Natural killer cell (primary cell): ENCODE measurements at regions of chr11 and their contacts with region 1.

Region 1: DNA sequence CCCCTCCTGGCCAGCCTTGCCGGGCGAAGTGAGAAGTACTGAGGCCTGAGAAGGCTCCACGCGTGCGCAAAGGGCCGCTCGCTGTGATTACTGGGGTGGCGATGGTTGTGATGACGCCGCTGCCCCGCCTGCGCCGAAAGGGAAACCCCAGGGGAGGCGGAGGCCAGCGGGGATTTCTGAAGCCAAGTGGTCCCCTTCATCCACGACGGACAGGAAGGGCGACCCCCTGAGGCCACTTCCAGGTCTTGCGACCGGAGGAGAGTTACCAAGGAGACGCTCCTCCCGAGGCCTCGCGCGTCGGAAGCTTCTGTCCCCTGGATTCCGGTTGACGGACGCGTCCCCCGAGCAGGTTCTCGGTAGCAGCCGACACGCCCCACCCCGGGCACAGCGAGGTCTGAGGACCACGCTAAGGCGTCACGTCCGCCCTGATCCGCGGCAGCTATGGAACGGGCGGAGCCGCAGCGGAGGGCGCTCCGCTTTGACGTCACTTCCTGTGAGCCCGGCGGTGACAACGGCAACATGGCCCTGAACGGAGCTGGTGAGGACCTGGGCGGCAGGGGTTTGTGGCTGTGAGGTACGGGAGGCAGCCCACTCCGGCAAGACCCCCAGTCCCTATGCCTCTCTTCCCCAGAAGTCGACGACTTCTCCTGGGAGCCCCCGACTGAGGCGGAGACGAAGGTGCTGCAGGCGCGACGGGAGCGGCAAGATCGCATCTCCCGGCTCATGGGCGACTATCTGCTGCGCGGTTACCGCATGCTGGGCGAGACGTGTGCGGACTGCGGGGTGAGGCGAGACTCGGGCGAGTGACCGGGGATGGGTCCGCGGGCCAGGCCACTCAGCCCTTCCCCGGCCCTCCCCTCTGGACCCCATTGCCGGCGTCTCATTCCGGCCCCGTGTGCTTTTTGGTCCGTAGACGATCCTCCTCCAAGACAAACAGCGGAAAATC is at the start of gene ZNRD2:
- DNase-seq: peak; percentile 96 to 99
- ATAC-seq: peak; percentile 59 to 86 (median 70)
- H3K4me3 ChIP-seq: peak within 1 kb of the TSS; percentile 54
- H3K4me3 Mint-ChIP-seq: peak within 1 kb of the TSS; percentile 98
- H3K27ac ChIP-seq: peak within 1 kb of the TSS; percentile 97
- H3K27ac Mint-ChIP-seq: peak within 1 kb of the TSS; percentile 99
- H3K4me1 ChIP-seq: peaks cover 85% of the 10 kb centered on the region
- H3K4me1 Mint-ChIP-seq: peaks cover 64 to 86% of the 10 kb centered on the region in 2 donors
- H3K27me3 ChIP-seq: no peaks in the 10 kb centered on the region
- H3K27me3 Mint-ChIP-seq: no peaks in the 10 kb centered on the region
- CTCF ChIP-seq: peak; percentile 29
- total RNA-seq, gene ZNRD2: 40.9 to 64.1 (median 60.0) TPM

Region 2: GRCh38 chr11:65382033-65382807 is 188.0 kb before region 1 on chr11 and contains the start of gene SLC25A45:
- intact Hi-C with region 1: loop called (anchors 5 kb)
- DNase-seq: peak; percentile 90 to 94
- ATAC-seq: peak; percentile 75 to 89 (median 79)
- H3K4me3 ChIP-seq: peak within 1 kb of the TSS; percentile 51
- H3K4me3 Mint-ChIP-seq: peak within 1 kb of the TSS; percentile 89
- H3K27ac ChIP-seq: peak within 1 kb of the TSS; percentile 92
- H3K27ac Mint-ChIP-seq: peak within 1 kb of the TSS; percentile 99
- H3K4me1 ChIP-seq: peaks cover 81% of the 10 kb centered on the region
- H3K4me1 Mint-ChIP-seq: peaks cover 39 to 56% of the 10 kb centered on the region in 2 donors
- H3K27me3 ChIP-seq: no peaks in the 10 kb centered on the region
- H3K27me3 Mint-ChIP-seq: no peaks in the 10 kb centered on the region
- CTCF ChIP-seq: peak; percentile 83
- total RNA-seq, gene SLC25A45: 50.9 to 61.1 (median 61.0) TPM

Region 3: DNA sequence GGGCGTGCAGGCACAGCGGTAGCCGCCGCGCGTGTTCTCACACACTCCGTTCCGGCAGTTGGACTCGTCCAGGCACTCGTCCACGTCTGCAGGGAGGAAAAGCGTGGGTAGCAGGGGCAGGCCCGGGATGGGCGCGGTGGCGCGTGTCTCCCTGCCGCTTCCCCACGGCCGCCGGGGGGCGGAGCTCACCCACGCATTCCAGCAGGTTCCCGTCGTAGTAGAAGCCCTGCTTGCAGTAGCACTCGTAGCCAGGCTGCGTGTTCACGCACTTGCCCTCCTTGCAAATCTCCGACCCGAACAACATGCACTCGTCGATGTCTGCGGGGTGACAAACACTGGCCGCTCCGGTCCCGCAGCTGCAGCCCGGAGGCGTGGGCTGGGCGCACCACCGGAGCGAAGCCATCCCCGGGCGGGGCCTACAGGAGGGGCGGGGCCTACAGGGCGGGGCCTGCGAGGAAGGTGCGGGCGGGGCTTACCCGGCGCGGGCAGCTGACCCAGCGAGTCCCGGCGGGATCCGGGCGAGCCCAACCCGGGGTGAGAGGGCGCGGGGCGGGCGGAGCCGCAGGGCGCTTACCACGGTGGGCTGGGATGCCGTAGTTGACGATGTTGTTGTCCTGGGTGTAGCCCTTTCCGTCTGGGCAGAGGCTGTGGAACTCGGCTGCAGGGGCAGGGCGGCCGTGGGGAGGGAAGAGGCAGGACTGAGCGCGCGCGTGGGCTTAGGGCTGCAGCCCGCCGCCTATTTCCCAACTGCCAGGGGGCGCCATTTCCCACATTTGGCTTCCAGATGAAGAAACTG is 29.8 kb before region 1 on chr11:
- intact Hi-C with region 1: loop called (anchors 1 kb)
- DNase-seq: peak; percentile 88 to 93
- ATAC-seq: peak; percentile 88 to 96 (median 90)
- H3K4me3 ChIP-seq: peak overlapping the region; percentile 71
- H3K4me3 Mint-ChIP-seq: peak overlapping the region; percentile 88
- H3K27ac ChIP-seq: peak overlapping the region; percentile 70
- H3K27ac Mint-ChIP-seq: peak overlapping the region; percentile 39 to 76
- H3K4me1 ChIP-seq: peaks cover 17% of the 10 kb centered on the region
- H3K4me1 Mint-ChIP-seq: peaks cover 7 to 40% of the 10 kb centered on the region in 2 donors
- H3K27me3 ChIP-seq: no peaks in the 10 kb centered on the region
- H3K27me3 Mint-ChIP-seq: no peaks in the 10 kb centered on the region
- CTCF ChIP-seq: peak; percentile 52

Region 4: GRCh38 chr11:65588199-65589054 is 18.2 kb after region 1 on chr11:
- intact Hi-C with region 1: loop called (anchors 1 kb)
- DNase-seq: peak; percentile 65 to 90
- ATAC-seq: peak; percentile 82 to 86 (median 84)
- H3K4me3 ChIP-seq: no peak overlapping the region
- H3K4me3 Mint-ChIP-seq: peak overlapping the region; percentile 2
- H3K27ac ChIP-seq: peak overlapping the region; percentile 83
- H3K27ac Mint-ChIP-seq: peak overlapping the region; percentile 86 to 93
- H3K4me1 ChIP-seq: peaks cover 40% of the 10 kb centered on the region
- H3K4me1 Mint-ChIP-seq: peaks cover 17 to 36% of the 10 kb centered on the region in 2 donors
- H3K27me3 ChIP-seq: no peaks in the 10 kb centered on the region
- H3K27me3 Mint-ChIP-seq: no peaks in the 10 kb centered on the region
- CTCF ChIP-seq: peak; percentile 65

Region 5: DNA sequence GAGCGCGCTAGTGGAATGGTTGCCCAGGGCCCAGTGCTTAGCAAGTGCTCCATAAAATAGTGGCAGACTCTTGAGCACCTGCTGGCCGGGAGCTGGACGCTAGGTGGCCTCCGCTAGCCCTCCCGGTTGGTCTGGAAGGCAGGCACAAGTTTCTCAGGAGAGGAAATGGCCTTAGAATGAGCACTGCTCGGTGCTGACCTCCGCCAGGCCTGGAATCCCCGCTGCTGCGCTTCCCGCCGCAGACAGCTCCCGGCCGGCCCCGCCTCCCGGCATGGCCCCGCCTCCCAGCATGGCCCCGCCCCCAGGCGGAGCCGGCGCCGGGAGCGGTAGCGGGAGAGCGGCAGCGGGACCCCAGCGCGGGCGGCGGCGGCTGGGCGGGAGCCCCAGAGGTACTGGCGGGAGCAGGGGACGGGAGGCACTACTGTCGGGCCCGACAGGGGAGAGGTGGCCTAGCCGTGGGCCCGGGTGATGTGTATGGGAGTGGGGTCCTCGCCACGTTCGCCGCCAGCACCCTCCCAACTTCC is 67.6 kb after region 1 on chr11 and contains the start of gene SIPA1:
- intact Hi-C with region 1: loop called (anchors 2 kb)
- DNase-seq: peak; percentile 86 to 88
- ATAC-seq: peak; percentile 41 to 62 (median 49)
- H3K4me3 ChIP-seq: peak within 1 kb of the TSS; percentile 98
- H3K4me3 Mint-ChIP-seq: peak within 1 kb of the TSS; percentile 95
- H3K27ac ChIP-seq: peak within 1 kb of the TSS; percentile 98
- H3K27ac Mint-ChIP-seq: peak within 1 kb of the TSS; percentile 98 to 99
- H3K4me1 ChIP-seq: peaks cover 83% of the 10 kb centered on the region
- H3K4me1 Mint-ChIP-seq: peaks cover 52 to 64% of the 10 kb centered on the region in 2 donors
- H3K27me3 ChIP-seq: no peaks in the 10 kb centered on the region
- H3K27me3 Mint-ChIP-seq: no peaks in the 10 kb centered on the region
- CTCF ChIP-seq: peak; percentile 20
- total RNA-seq, gene SIPA1: 520 to 776 (median 743) TPM